IMR-90 (cell line): ENCODE measurements at regions of chr1 and their contacts with region 1.

Region 1: DNA sequence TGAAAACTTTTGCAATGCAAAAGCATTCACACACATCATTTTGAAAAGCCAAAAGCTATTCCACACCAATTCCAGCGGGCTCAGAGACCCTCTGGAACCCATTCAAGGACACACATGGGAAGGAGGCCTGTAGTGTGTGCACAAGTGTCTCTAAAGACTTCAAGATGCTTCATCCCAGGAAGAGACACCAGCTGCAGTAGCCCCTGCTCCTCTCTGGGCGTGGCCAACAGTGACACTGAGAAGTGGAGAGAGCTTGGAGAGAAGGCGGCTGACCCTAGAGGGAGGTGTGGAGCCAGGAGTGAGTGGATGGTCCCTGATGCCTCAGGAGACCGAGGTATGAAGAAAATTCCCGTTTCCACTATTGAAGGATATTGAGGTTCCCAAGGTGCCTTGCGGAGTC is 14.9 kb upstream of the TNNI1 start:
- DNase-seq: peak; percentile 26
- ATAC-seq: peak; percentile 55
- H3K4me3 ChIP-seq: no peak overlapping the region
- H3K27ac ChIP-seq: no peak overlapping the region
- H3K4me1 ChIP-seq: no peaks in the 10 kb centered on the region
- H3K27me3 ChIP-seq: peaks cover 4% of the 10 kb centered on the region; the same call in 1 of the 2 replicates
- CTCF ChIP-seq: peak; percentile 22; the same call in 1 of the 2 replicates
- POLR2A ChIP-seq: no peak
- RAD21 ChIP-seq: peak; percentile 38

Region 2: DNA sequence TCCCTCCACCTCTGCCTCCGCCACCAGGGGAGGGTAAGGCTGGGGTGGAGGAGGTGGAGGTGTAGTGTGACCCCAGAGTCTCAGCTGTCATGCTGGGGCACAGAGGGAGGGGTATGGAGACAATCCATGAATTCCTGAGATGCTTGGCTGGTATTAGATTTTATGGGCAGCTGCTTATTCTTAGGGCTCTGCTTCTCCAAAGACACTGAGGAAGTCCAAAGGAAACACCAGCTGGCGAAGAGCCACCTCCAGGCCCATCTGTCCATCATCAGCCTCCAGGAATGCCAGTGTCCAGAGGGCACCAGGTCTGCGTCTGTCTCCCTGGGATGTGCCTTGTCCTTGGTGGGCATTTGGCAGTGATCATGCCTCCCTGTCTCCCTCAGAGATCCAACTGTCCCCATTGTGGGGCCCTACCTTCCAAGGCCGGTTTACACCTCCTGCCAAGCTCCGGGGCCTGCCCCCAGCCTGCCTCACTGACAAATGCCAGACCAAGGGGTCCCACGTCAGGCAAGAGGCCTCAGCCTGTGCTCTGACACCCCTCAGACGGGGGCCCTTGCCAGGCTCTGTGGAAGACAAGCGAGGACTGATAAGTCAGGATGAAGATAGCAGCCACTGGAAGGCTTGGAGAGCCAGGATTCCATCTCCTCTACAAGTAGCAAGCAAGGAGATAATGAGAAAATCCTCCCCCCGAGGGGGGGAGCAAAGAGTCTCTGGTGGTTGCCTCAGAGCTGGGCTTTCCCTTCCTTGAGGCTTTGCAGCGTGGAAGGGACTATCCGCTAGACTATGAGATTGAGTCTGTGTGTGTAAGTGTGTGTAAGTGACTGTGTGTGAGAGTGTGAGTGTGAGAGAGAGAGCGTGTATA is 16.4 kb before region 1 on chr1:
- CTCF ChIA-PET with region 1: interaction called, 13 read pairs
- POLR2A ChIA-PET with region 1: no interaction called
- dilution Hi-C with region 1: no loop called
- in situ Hi-C with region 1: no loop called
- intact Hi-C with region 1: no loop called
- DNase-seq: no peak
- ATAC-seq: no peak
- H3K4me3 ChIP-seq: no peak overlapping the region
- H3K27ac ChIP-seq: no peak overlapping the region
- H3K4me1 ChIP-seq: no peaks in the 10 kb centered on the region
- H3K27me3 ChIP-seq: peaks cover 57% of the 10 kb centered on the region
- CTCF ChIP-seq: no peak
- POLR2A ChIP-seq: no peak
- RAD21 ChIP-seq: no peak